WTC11 (cell line): ENCODE measurements at regions of chr1 and their contacts with region 1.

Region 1: GRCh38 chr1:169711469-169712281 is at the start of gene SELL:
- DNase-seq: peak; percentile 71
- ATAC-seq: peak; percentile 94
- H3K4me3 Mint-ChIP-seq: peak within 1 kb of the TSS; percentile 66
- H3K27ac Mint-ChIP-seq: no peak within 1 kb of the TSS
- H3K4me1 Mint-ChIP-seq: peaks cover 8% of the 10 kb centered on the region
- H3K27me3 Mint-ChIP-seq: peaks cover 12% of the 10 kb centered on the region; the same call in 1 of the 2 replicates
- CTCF ChIP-seq: peak; percentile 44
- total RNA-seq, gene SELL: 0.26 to 0.85 TPM (median 0.41 TPM) in 3 replicates

Region 2: DNA sequence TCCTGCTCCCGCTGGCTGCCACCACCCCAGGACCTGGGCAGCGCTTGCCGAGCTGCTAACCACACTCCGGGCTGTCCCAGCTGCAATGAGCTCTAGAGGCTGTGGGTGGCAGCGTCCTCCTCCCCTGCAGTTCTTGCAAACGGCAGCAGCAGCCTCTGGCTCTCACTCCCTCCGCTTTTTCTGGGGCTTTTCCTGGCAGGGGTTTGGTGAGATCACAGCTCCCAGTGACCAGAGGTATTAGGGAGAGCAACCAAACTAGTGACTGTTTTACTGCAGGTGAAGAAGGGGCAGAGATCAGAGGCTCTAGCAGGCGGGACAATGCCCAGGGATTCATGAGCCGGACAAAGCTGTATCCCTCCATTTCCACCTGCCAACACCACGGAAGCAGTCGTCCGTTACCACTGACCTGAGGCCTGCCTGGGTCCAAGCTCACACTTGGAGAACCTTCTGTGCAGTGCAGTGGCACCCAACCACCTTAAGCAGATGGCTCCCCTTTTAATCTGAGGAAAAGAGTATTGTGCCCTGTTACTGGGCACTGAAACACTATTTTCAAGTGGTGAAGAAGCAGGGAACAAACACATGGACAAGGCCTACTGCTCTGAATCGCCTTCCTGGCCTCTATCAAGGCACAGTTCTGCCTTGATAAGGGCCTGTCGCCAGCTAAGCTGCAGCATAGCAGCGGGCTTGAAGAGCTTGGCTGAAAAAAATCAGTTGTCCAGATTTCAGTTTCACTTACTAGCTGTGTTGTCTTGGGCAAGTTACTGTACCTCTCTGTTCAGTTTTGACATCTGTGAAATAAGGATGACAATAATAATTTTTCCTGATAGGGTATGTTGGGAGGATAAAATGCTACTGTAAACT is 125.0 kb before region 1 on chr1 and contains the start of gene F5:
- CTCF ChIA-PET with region 1: interaction called, 36 read pairs
- POLR2A ChIA-PET with region 1: no interaction called
- DNase-seq: peak; percentile 81
- ATAC-seq: peak; percentile 100
- H3K4me3 Mint-ChIP-seq: peak within 1 kb of the TSS; percentile 48; the same call in 1 of the 2 replicates
- H3K27ac Mint-ChIP-seq: no peak within 1 kb of the TSS
- H3K4me1 Mint-ChIP-seq: peaks cover 6% of the 10 kb centered on the region; the same call in 1 of the 2 replicates
- H3K27me3 Mint-ChIP-seq: peaks cover 4% of the 10 kb centered on the region; the same call in 1 of the 2 replicates
- CTCF ChIP-seq: no peak
- total RNA-seq, gene F5: 0.20 to 0.21 TPM (median 0.21 TPM) in 3 replicates

Region 3: GRCh38 chr1:169601093-169601881 is 110.4 kb before region 1 on chr1:
- CTCF ChIA-PET with region 1: interaction called, 26 read pairs
- POLR2A ChIA-PET with region 1: no interaction called
- DNase-seq: no peak
- ATAC-seq: no peak
- H3K4me3 Mint-ChIP-seq: no peak overlapping the region
- H3K27ac Mint-ChIP-seq: no peak overlapping the region
- H3K4me1 Mint-ChIP-seq: no peaks in the 10 kb centered on the region
- H3K27me3 Mint-ChIP-seq: peaks cover 7% of the 10 kb centered on the region
- CTCF ChIP-seq: no peak

Region 4: DNA sequence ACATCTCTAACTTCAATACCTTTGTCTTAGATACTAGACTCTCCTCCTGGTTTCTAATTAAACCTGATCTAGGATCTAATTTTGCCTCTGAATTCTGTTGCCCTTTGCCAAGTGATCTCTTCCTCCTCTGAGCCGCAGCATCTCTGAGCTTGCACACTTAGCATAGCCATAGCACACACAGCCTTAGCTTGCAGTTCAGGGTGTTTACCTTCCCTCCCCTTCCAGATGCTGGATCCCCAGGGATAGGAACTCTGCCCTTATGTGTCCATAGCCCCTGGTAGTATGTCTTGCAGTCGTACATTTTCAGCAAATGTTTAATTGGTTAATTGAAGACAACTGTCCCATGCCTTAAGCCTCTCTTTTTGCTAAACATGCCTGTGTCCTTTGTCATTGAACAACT is 30.5 kb before region 1 on chr1:
- CTCF ChIA-PET with region 1: interaction called, 11 read pairs
- POLR2A ChIA-PET with region 1: no interaction called
- DNase-seq: no peak
- ATAC-seq: no peak
- H3K4me3 Mint-ChIP-seq: no peak overlapping the region
- H3K27ac Mint-ChIP-seq: no peak overlapping the region
- H3K4me1 Mint-ChIP-seq: peaks cover 24% of the 10 kb centered on the region
- H3K27me3 Mint-ChIP-seq: peaks cover 18% of the 10 kb centered on the region
- CTCF ChIP-seq: no peak

Region 5: GRCh38 chr1:169809370-169810095 is 97.9 kb after region 1 on chr1:
- CTCF ChIA-PET with region 1: interaction called, 13 read pairs
- POLR2A ChIA-PET with region 1: no interaction called
- DNase-seq: no peak
- ATAC-seq: no peak
- H3K4me3 Mint-ChIP-seq: no peak overlapping the region
- H3K27ac Mint-ChIP-seq: no peak overlapping the region
- H3K4me1 Mint-ChIP-seq: no peaks in the 10 kb centered on the region
- H3K27me3 Mint-ChIP-seq: no peaks in the 10 kb centered on the region
- CTCF ChIP-seq: peak; percentile 45

Region 6: DNA sequence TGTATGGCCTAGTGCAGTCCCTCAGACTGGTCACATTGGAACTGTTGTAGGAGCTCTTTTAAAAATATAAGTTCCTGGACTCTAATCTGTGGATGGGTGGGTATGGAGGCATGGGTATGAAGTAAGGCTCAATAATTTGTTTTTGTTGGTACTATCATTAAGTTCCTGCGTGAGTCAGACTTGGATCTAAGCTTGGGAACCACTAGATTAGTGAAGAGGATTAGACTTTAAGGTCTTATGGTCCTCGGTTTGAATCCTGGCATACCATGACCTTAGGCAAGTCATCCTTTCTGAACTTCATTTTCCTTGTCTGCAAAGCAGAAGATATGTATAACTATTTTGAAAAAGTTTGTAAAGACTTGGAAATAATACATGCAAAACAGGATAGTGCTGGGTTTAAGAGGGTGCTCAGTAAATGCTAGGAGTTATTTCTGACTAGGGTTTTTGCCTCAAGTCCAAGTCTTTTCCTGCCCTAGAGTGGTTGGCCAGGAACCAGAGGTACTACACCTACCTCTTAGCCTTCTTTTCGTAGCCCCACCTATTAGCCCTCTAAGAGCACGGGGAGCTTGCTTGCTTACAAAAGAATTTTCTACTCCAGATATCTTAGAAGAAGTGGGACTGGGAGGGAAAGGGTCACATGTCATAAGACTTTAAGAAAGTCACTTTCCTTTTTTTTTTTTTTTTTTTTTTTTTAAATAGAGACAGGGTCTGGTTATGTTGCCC is 121.7 kb after region 1 on chr1:
- CTCF ChIA-PET with region 1: no interaction called
- POLR2A ChIA-PET with region 1: no interaction called
- DNase-seq: no peak
- ATAC-seq: no peak
- H3K4me3 Mint-ChIP-seq: no peak overlapping the region
- H3K27ac Mint-ChIP-seq: no peak overlapping the region
- H3K4me1 Mint-ChIP-seq: no peaks in the 10 kb centered on the region
- H3K27me3 Mint-ChIP-seq: no peaks in the 10 kb centered on the region
- CTCF ChIP-seq: no peak